Activated CD8-positive, alpha-beta T cell treated with anti-CD3 and anti-CD28 coated beads for 36 hours (primary cell): ENCODE measurements at regions of chr4 and their contacts with region 1.

Region 1: DNA sequence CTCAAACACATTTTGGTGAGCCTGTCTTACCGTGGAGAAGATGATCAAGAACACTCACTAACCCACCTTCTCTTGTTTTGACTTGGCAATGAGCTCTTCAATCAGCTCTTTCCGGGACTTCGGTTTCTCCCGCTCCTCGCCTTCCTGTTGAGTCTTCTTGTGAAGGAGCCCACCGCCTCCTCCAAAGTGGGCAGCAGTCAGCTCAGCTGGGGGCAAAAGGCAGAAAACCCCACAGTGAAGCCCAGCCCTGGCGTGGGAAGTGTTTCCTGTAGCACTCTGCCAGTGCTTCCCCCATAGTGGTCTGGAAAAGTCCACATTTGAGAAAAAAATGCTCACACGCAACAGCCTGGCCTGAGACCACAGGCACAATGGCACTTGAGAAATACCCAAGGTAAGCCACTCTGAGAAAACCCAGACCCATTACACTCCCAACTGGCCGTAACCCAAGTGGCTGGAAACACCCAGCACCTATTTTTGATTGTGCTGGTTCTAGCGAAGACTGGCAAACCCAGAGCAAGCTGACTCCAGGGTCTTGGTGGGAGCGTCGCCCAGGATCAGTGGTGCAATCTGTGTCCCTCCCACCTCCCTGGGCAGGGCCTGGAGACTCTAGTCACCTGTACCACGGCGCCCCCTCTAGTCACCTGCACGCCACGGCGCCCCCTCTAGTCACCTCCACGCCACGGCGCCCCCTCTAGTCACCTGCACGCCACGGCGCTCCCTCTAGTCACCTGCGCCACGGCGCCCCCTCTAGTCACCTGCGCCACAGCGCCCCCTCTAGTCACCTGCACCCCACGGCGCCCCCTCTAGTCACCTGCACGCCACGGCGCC is 8.6 kb downstream of the NOP14 start:
- DNase-seq: peak; percentile 87
- ATAC-seq: peak; percentile 80
- H3K4me3 Mint-ChIP-seq: peak overlapping the region; percentile 41
- H3K27ac Mint-ChIP-seq: peak overlapping the region; percentile 93
- H3K4me1 Mint-ChIP-seq: peaks cover 59% of the 10 kb centered on the region
- H3K27me3 Mint-ChIP-seq: no peaks in the 10 kb centered on the region
- CTCF ChIP-seq: no peak

Region 2: DNA sequence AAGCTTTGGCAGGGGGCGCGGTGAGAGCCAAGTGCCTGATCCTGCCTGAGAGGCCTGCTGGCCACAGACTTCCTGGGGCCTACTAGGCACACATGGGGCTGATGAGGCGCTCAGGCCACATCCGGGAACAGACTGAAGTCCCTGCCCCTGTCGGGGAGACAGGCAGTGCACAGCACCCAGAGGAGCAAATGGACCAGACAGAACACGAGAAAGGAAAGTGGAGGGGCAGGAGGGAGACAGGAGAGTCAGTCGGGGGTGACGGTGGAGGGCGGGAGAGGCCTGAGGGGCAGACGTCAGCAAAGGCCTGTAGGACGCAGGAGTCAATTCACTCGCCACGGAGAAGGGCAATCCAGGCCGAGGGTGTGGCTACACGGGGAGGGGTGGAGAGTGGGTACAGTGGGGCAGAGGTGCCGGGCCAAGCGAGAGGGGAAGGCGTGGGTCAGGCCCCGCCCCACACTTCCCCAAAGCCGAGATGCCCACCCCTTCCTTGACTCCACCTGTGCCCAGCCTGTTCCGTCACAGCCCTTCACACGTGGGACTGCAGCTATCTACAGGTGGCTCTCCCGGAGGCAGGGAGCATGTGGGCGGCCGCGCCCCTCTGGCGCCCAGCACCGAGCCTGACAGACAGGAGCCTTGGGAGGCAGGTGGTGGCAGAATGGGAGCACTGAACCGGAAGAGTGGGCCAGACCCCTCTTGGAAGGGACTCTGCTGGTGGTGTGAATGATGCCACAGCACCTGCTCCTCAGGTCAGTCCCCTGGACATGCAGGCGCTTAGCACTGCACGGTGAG is 11.8 kb before region 1 on chr4:
- CTCF ChIA-PET with region 1: interaction called, 59 read pairs
- POLR2A ChIA-PET with region 1: interaction called, 121 read pairs
- intact Hi-C with region 1: no loop called
- DNase-seq: peak; percentile 52
- ATAC-seq: peak; percentile 68
- H3K4me3 Mint-ChIP-seq: peak overlapping the region; percentile 19
- H3K27ac Mint-ChIP-seq: peak overlapping the region; percentile 83
- H3K4me1 Mint-ChIP-seq: peaks cover 51% of the 10 kb centered on the region
- H3K27me3 Mint-ChIP-seq: no peaks in the 10 kb centered on the region
- CTCF ChIP-seq: no peak